ENCODE measurements at regions of chr9 and their contacts with region 1.

Region 1: GRCh38 chr9:68739621-68740174 is 34.7 kb downstream of the PIP5K1B start:
- DNase-seq: no peak
- ATAC-seq: peak; percentile 31 to 51

Region 2: DNA sequence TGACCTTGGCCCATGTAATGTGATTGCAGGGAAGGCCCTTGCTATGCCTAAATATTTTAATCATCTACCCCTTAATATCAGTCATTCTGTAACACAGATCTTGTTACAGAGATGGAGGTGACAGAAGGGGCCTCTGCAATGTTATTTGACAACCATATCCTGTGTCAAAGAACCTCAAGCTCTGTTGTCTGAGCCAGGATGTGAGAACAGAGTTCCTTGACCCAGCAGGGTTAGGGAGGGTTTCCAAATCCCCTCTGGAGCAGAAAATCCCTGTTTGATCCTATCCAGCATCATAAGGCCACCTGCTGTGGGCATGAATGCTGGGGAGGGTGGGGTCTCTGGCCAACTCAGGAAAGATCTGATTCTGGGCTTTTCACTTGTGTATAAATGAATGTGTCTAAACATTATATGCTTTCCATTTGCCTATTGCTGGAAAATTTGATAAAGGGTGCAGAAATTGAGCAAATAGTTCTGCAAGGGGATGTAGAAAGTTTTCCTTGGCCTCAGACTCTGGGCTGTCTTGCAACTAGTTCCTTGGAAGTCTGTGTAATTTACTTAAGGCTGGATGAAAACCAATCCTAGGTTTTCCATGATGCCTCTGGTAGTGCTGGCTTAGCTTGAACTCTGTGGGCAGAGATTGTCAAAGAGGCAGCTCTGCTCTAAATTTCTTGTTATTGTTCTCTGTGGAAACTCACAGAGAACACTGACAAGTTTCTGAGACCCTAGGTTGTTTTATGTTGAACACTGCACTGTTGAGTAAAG is 312.3 kb before region 1 on chr9:
- intact Hi-C with region 1: no loop called
- DNase-seq: peak; percentile 23
- ATAC-seq: peak; percentile 73 to 75

Region 3: GRCh38 chr9:68802525-68803015 is 62.9 kb after region 1 on chr9:
- intact Hi-C with region 1: loop called in 1 of 2 experiments (anchors 10 kb)
- DNase-seq: no peak
- ATAC-seq: no peak